ENCODE measurements at regions of chr14 and their contacts with region 1.

Region 1: GRCh38 chr14:22900081-22900799 is 17.2 kb downstream of the REM2 start:
- H3K4me3 Mint-ChIP-seq: no peak overlapping the region
- H3K27ac Mint-ChIP-seq: no peak overlapping the region
- H3K4me1 Mint-ChIP-seq: peaks cover 4% of the 10 kb centered on the region
- H3K27me3 Mint-ChIP-seq: no peaks in the 10 kb centered on the region

Region 2: DNA sequence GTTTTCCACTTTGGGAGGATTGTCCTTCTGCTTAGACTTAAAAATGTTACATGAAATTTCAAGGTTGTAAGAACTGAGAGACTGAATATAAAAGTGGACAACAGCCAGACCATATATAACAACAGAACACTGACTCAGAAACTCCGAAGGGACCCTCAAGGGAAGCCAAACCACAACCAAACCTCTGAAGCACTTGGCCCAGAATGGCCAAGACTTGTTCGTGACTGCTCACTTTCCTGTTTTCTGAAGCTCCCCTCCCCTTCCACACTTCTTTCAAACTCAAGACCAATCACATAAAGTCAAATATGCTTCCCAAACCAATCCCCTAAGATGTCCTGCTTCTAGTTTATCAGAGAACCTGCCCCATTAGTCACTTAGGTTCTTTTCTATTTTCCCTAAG is 269.8 kb before region 1 on chr14:
- intact Hi-C with region 1: no loop called
- H3K4me3 Mint-ChIP-seq: no peak overlapping the region
- H3K27ac Mint-ChIP-seq: no peak overlapping the region
- H3K4me1 Mint-ChIP-seq: no peaks in the 10 kb centered on the region
- H3K27me3 Mint-ChIP-seq: peaks cover 12% of the 10 kb centered on the region

Region 3: GRCh38 chr14:22796087-22796707 is 104.0 kb before region 1 on chr14:
- intact Hi-C with region 1: no loop called
- H3K4me3 Mint-ChIP-seq: no peak overlapping the region
- H3K27ac Mint-ChIP-seq: peak overlapping the region; percentile 64
- H3K4me1 Mint-ChIP-seq: peaks cover 89% of the 10 kb centered on the region
- H3K27me3 Mint-ChIP-seq: no peaks in the 10 kb centered on the region

Region 4: GRCh38 chr14:22848351-22849164 is 51.7 kb before region 1 on chr14:
- intact Hi-C with region 1: no loop called
- H3K4me3 Mint-ChIP-seq: peak overlapping the region; percentile 53
- H3K27ac Mint-ChIP-seq: peak overlapping the region; percentile 89
- H3K4me1 Mint-ChIP-seq: peaks cover 93% of the 10 kb centered on the region
- H3K27me3 Mint-ChIP-seq: no peaks in the 10 kb centered on the region

Region 5: GRCh38 chr14:22872033-22872832 is 28.0 kb before region 1 on chr14:
- intact Hi-C with region 1: loop called (anchors 1 kb)
- H3K4me3 Mint-ChIP-seq: peak overlapping the region; percentile 85
- H3K27ac Mint-ChIP-seq: peak overlapping the region; percentile 87
- H3K4me1 Mint-ChIP-seq: peaks cover 19% of the 10 kb centered on the region
- H3K27me3 Mint-ChIP-seq: no peaks in the 10 kb centered on the region